Esophagus muscularis mucosa (tissue), 4 donors: ENCODE measurements at regions of chr19 and their contacts with region 1.

Region 1: GRCh38 chr19:5891938-5892771 is 11.4 kb downstream of the NDUFA11 start:
- DNase-seq: no peak
- H3K4me3 ChIP-seq: no peak overlapping the region
- H3K27ac ChIP-seq: peak overlapping the region in 2 of 4 donors; percentile 10 to 79
- H3K4me1 ChIP-seq: peaks cover 24 to 45% (median 38%) of the 10 kb centered on the region in 4 donors
- H3K27me3 ChIP-seq: peaks cover 0 to 4% (median 0%) of the 10 kb centered on the region in 4 donors
- CTCF ChIP-seq: peak; percentile 79 to 87 (median 85)
- EP300 ChIP-seq: no peak
- POLR2A ChIP-seq: no peak

Region 2: GRCh38 chr19:5753743-5754142 is 138.4 kb before region 1 on chr19:
- intact Hi-C with region 1: no loop called
- DNase-seq: no peak
- H3K4me3 ChIP-seq: no peak overlapping the region
- H3K27ac ChIP-seq: no peak overlapping the region
- H3K4me1 ChIP-seq: no peaks in the 10 kb centered on the region
- H3K27me3 ChIP-seq: peaks cover 0 to 32% (median 0%) of the 10 kb centered on the region in 4 donors
- CTCF ChIP-seq: no peak
- EP300 ChIP-seq: no peak
- POLR2A ChIP-seq: no peak

Region 3: GRCh38 chr19:5803752-5804515 is 88.2 kb before region 1 on chr19:
- intact Hi-C with region 1: loop called (anchors 1 kb)
- DNase-seq: peak; percentile 95
- H3K4me3 ChIP-seq: peak overlapping the region; percentile 65 to 78 (median 72)
- H3K27ac ChIP-seq: peak overlapping the region; percentile 74 to 92 (median 89)
- H3K4me1 ChIP-seq: peaks cover 17 to 38% (median 30%) of the 10 kb centered on the region in 4 donors
- H3K27me3 ChIP-seq: peaks cover 0 to 61% (median 5%) of the 10 kb centered on the region in 4 donors
- CTCF ChIP-seq: peak; percentile 95 to 98 (median 98)
- EP300 ChIP-seq: no peak
- POLR2A ChIP-seq: no peak

Region 4: DNA sequence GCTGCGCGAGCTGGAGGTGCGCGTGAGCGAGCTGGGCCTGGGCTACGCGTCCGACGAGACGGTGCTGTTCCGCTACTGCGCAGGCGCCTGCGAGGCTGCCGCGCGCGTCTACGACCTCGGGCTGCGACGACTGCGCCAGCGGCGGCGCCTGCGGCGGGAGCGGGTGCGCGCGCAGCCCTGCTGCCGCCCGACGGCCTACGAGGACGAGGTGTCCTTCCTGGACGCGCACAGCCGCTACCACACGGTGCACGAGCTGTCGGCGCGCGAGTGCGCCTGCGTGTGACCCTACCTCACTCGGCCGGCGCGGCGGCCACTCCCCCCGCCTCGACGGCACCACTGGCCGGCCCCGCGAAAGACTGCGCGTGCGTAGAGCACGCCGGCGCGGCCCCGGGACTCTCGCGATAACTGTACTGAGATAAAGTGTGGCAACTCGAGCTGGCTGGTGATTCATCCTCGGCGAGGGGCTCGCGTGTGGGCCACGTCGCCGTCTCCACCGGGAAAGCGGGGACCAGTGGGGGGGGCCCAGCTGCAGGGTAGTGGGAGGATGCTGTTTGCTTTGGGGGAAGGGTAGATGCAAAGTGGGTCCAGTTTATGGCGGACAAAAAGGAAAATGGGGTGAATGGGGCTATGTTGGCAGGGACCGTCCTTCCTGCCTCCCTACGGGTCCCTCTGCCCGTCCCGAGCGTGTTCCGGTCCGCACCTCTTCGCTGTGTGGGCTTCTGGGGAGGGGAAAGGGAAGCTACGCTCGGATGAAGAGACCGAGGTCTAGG is 64.1 kb before region 1 on chr19:
- intact Hi-C with region 1: loop called (anchors 5 kb)
- DNase-seq: peak; percentile 98
- H3K4me3 ChIP-seq: peak overlapping the region; percentile 52 to 68 (median 54)
- H3K27ac ChIP-seq: peak overlapping the region; percentile 89 to 95 (median 91)
- H3K4me1 ChIP-seq: peaks cover 21 to 45% (median 36%) of the 10 kb centered on the region in 4 donors
- H3K27me3 ChIP-seq: peaks cover 0 to 39% (median 1%) of the 10 kb centered on the region in 4 donors
- CTCF ChIP-seq: peak in 1 of 3 experiments; percentile 4
- EP300 ChIP-seq: no peak
- POLR2A ChIP-seq: peak; percentile 69

Region 5: GRCh38 chr19:5913739-5914357 is 21.7 kb after region 1 on chr19 and contains the start of gene CAPS:
- intact Hi-C with region 1: no loop called
- DNase-seq: no peak
- H3K4me3 ChIP-seq: no peak within 1 kb of the TSS
- H3K27ac ChIP-seq: peak within 1 kb of the TSS; percentile 53 to 82 (median 65)
- H3K4me1 ChIP-seq: peaks cover 29 to 30% (median 29%) of the 10 kb centered on the region in 4 donors
- H3K27me3 ChIP-seq: no peaks in the 10 kb centered on the region
- CTCF ChIP-seq: no peak
- EP300 ChIP-seq: no peak
- POLR2A ChIP-seq: no peak
- total RNA-seq, gene CAPS: 5.5 to 16.1 (median 15.2) TPM